CD8-positive, alpha-beta memory T cell (primary cell): ENCODE measurements at regions of chr1 and their contacts with region 1.

Region 1: GRCh38 chr1:62508187-62508758 is 71.4 kb downstream of the USP1 start:
- DNase-seq: peak in 2 of 5 donors; percentile 5 to 9
- H3K4me3 ChIP-seq: no peak overlapping the region
- H3K4me3 Mint-ChIP-seq: no peak overlapping the region
- H3K27ac ChIP-seq: no peak overlapping the region
- H3K27ac Mint-ChIP-seq: no peak overlapping the region
- H3K4me1 ChIP-seq: no peaks in the 10 kb centered on the region
- H3K4me1 Mint-ChIP-seq: no peaks in the 10 kb centered on the region
- H3K27me3 ChIP-seq: no peaks in the 10 kb centered on the region
- H3K27me3 Mint-ChIP-seq: no peaks in the 10 kb centered on the region

Region 2: GRCh38 chr1:62417361-62417999 is 90.8 kb before region 1 on chr1:
- CTCF ChIA-PET with region 1: no interaction called
- POLR2A ChIA-PET with region 1: no interaction called
- DNase-seq: no peak
- H3K4me3 ChIP-seq: no peak overlapping the region
- H3K4me3 Mint-ChIP-seq: no peak overlapping the region
- H3K27ac ChIP-seq: no peak overlapping the region
- H3K27ac Mint-ChIP-seq: peak overlapping the region in 2 of 8 donors; percentile 0 to 57
- H3K4me1 ChIP-seq: no peaks in the 10 kb centered on the region
- H3K4me1 Mint-ChIP-seq: no peaks in the 10 kb centered on the region
- H3K27me3 ChIP-seq: no peaks in the 10 kb centered on the region
- H3K27me3 Mint-ChIP-seq: peaks cover under 1 to 12% of the 10 kb centered on the region in 2 donors

Region 3: GRCh38 chr1:62746085-62746808 is 238.0 kb after region 1 on chr1:
- CTCF ChIA-PET with region 1: interaction called, 14 read pairs
- POLR2A ChIA-PET with region 1: no interaction called
- DNase-seq: peak in 2 of 5 donors; percentile 10 to 27
- H3K4me3 ChIP-seq: no peak overlapping the region
- H3K4me3 Mint-ChIP-seq: no peak overlapping the region
- H3K27ac ChIP-seq: no peak overlapping the region
- H3K27ac Mint-ChIP-seq: no peak overlapping the region
- H3K4me1 ChIP-seq: no peaks in the 10 kb centered on the region
- H3K4me1 Mint-ChIP-seq: no peaks in the 10 kb centered on the region
- H3K27me3 ChIP-seq: no peaks in the 10 kb centered on the region
- H3K27me3 Mint-ChIP-seq: peaks cover 3 to 11% of the 10 kb centered on the region in 2 donors